ENCODE measurements at regions of chr12 and their contacts with region 1.

Region 1: GRCh38 chr12:51351913-51352532 is 5.5 kb upstream of the CELA1 start:
- DNase-seq: peak; percentile 66
- H3K4me3 ChIP-seq: no peak overlapping the region
- H3K27ac ChIP-seq: no peak overlapping the region
- H3K4me1 ChIP-seq: no peaks in the 10 kb centered on the region
- H3K27me3 ChIP-seq: no peaks in the 10 kb centered on the region
- CTCF ChIP-seq: peak; percentile 66 to 80
- POLR2A ChIP-seq: peak; percentile 24

Region 2: DNA sequence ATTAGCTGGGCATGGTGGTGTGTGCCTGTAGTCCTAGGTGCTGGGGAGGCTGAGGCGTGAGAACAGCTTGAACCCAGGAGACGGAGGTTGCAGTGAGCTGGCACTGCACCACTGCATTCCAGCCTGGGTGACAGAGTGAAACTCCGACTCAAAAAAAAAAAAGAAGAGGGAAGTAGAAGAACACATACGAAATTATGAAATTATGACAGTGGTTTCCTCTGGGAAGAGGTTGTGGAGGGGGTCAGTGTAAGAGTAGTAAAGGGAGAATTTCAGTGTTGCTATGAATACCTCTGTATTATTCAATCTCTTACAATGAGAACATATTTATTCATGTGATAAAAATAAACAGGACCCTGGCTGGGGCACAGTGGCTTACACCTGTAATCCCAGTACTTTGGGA is 243.9 kb before region 1 on chr12:
- CTCF ChIA-PET with region 1: no interaction called
- POLR2A ChIA-PET with region 1: no interaction called
- dilution Hi-C with region 1: no loop called
- intact Hi-C with region 1: no loop called
- DNase-seq: no peak
- H3K4me3 ChIP-seq: no peak overlapping the region
- H3K27ac ChIP-seq: no peak overlapping the region
- H3K4me1 ChIP-seq: no peaks in the 10 kb centered on the region
- H3K27me3 ChIP-seq: no peaks in the 10 kb centered on the region
- CTCF ChIP-seq: no peak
- POLR2A ChIP-seq: no peak

Region 3: GRCh38 chr12:51391283-51392162 is 39.5 kb after region 1 on chr12 and contains the start of gene GALNT6:
- CTCF ChIA-PET with region 1: interaction called, 10 read pairs
- POLR2A ChIA-PET with region 1: no interaction called
- dilution Hi-C with region 1: no loop called
- intact Hi-C with region 1: no loop called
- DNase-seq: peak; percentile 29
- H3K4me3 ChIP-seq: peak within 1 kb of the TSS; percentile 66 to 72 (median 71)
- H3K27ac ChIP-seq: peak within 1 kb of the TSS; percentile 67
- H3K4me1 ChIP-seq: peaks cover 43% of the 10 kb centered on the region
- H3K27me3 ChIP-seq: no peaks in the 10 kb centered on the region
- CTCF ChIP-seq: no peak
- POLR2A ChIP-seq: no peak
- total RNA-seq, gene GALNT6: 38.3 and 39.2 TPM in 2 replicates